AG04449 (cell line): ENCODE measurements at regions of chr6 and their contacts with region 1.

Region 1: DNA sequence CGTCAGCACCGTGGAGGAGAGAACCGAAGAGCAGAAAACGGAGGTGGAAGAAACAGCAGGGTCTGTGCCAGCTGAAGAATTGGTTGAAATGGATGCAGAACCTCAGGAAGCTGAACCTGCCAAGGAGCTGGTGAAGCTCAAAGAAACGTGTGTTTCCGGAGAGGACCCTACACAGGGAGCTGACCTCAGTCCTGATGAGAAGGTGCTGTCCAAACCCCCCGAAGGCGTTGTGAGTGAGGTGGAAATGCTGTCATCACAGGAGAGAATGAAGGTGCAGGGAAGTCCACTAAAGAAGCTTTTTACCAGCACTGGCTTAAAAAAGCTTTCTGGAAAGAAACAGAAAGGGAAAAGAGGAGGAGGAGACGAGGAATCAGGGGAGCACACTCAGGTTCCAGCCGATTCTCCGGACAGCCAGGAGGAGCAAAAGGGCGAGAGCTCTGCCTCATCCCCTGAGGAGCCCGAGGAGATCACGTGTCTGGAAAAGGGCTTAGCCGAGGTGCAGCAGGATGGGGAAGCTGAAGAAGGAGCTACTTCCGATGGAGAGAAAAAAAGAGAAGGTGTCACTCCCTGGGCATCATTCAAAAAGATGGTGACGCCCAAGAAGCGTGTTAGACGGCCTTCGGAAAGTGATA is 41.6 kb downstream of the ZBTB2 start:
- DNase-seq: no peak
- H3K4me3 ChIP-seq: no peak overlapping the region
- CTCF ChIP-seq: no peak

Region 2: GRCh38 chr6:151330134-151330696 is 19.6 kb before region 1 on chr6:
- CTCF ChIA-PET with region 1: interaction called, 10 read pairs
- POLR2A ChIA-PET with region 1: no interaction called
- DNase-seq: peak; percentile 69
- H3K4me3 ChIP-seq: no peak overlapping the region
- CTCF ChIP-seq: no peak

Region 3: GRCh38 chr6:151370509-151371078 is 20.8 kb after region 1 on chr6:
- CTCF ChIA-PET with region 1: interaction called, 13 read pairs
- POLR2A ChIA-PET with region 1: no interaction called
- DNase-seq: peak; percentile 10
- H3K4me3 ChIP-seq: no peak overlapping the region
- CTCF ChIP-seq: peak; percentile 17

Region 4: DNA sequence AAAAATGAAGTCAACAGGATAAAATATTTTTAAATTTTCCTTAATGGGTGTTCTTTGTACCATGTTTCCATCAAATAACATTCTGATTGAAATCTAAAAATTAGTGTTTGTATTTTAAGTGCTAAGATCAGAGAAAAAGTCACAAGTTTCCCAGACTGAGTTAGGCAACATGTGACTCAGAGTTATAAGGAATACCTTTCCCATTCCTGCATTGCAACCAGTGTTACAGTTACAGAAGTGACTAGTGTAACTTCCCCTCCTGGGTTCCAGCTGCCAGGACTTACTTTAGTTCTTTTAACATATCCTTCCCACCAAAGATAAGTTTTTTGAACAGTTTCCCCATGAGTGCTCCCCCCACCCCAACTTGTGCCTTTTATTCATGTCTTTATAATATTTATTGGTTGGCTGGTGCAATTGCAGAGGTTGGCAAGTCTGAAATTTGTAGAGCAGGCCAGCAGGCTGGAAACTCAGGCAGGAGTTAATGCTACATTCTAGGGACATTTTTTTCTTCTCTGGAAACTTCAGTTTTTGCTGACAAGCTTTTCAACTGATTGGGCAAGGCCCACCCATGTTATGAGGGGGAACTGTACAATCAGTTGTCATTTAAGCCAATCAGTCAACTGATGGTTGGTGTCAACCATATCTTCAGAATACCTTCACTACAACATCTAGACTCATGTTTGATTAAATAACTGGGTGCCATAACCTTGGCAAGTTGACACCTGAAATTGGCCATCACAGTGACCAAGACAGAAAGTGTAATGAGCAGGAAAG is 434.9 kb after region 1 on chr6:
- CTCF ChIA-PET with region 1: no interaction called
- POLR2A ChIA-PET with region 1: no interaction called
- DNase-seq: no peak
- H3K4me3 ChIP-seq: no peak overlapping the region
- CTCF ChIP-seq: no peak